Activated B cell treated with CpG ODN at 0.5 μM for 24 hours (primary cell): ENCODE measurements at regions of chr3 and their contacts with region 1.

Region 1: DNA sequence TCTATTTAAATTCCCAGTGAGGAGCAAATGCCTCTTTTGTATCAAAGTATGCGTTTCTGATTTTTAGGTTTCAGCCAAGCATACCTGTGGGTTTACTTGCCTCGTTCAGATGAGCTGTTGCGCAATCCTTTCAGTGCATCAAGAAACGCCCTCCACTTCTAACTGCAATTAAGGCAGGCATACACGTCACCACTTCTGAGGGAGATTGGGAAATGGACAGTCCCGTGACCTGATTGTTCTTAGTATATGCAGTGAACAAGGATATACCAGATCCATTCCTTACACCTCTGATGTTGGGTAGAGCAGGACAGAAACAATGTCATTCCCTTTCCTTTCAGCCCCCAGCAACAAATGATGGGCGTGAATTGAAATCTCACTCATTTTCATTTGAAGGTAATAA is 219.0 kb downstream of the ITPR1 start:
- DNase-seq: no peak
- ATAC-seq: no peak
- H3K4me3 Mint-ChIP-seq: no peak overlapping the region
- H3K27ac Mint-ChIP-seq: no peak overlapping the region
- H3K4me1 Mint-ChIP-seq: peaks cover 2% of the 10 kb centered on the region
- H3K27me3 Mint-ChIP-seq: no peaks in the 10 kb centered on the region
- CTCF ChIP-seq: no peak

Region 2: GRCh38 chr3:4670352-4670751 is 41.8 kb before region 1 on chr3:
- CTCF ChIA-PET with region 1: no interaction called
- POLR2A ChIA-PET with region 1: no interaction called
- intact Hi-C with region 1: no loop called
- DNase-seq: no peak
- ATAC-seq: no peak
- H3K4me3 Mint-ChIP-seq: no peak overlapping the region
- H3K27ac Mint-ChIP-seq: no peak overlapping the region
- H3K4me1 Mint-ChIP-seq: no peaks in the 10 kb centered on the region
- H3K27me3 Mint-ChIP-seq: no peaks in the 10 kb centered on the region
- CTCF ChIP-seq: no peak

Region 3: GRCh38 chr3:4826237-4827100 is 114.3 kb after region 1 on chr3:
- CTCF ChIA-PET with region 1: interaction called, 4 read pairs
- POLR2A ChIA-PET with region 1: no interaction called
- intact Hi-C with region 1: loop called (anchors 5 kb)
- DNase-seq: no peak
- ATAC-seq: peak; percentile 53
- H3K4me3 Mint-ChIP-seq: peak overlapping the region; percentile 59
- H3K27ac Mint-ChIP-seq: peak overlapping the region; percentile 3
- H3K4me1 Mint-ChIP-seq: peaks cover 85% of the 10 kb centered on the region
- H3K27me3 Mint-ChIP-seq: no peaks in the 10 kb centered on the region
- CTCF ChIP-seq: no peak

Region 4: GRCh38 chr3:5041315-5041714 is 329.2 kb after region 1 on chr3:
- CTCF ChIA-PET with region 1: interaction called, 12 read pairs
- POLR2A ChIA-PET with region 1: interaction called, 3 read pairs
- intact Hi-C with region 1: no loop called
- DNase-seq: no peak
- ATAC-seq: no peak
- H3K4me3 Mint-ChIP-seq: no peak overlapping the region
- H3K27ac Mint-ChIP-seq: no peak overlapping the region
- H3K4me1 Mint-ChIP-seq: peaks cover 24% of the 10 kb centered on the region
- H3K27me3 Mint-ChIP-seq: no peaks in the 10 kb centered on the region
- CTCF ChIP-seq: no peak

Region 5: GRCh38 chr3:5057857-5058324 is 345.7 kb after region 1 on chr3:
- CTCF ChIA-PET with region 1: interaction called, 219 read pairs
- POLR2A ChIA-PET with region 1: interaction called, 7 read pairs
- intact Hi-C with region 1: loop called (anchors 1 kb)
- DNase-seq: peak; percentile 38
- ATAC-seq: peak; percentile 90
- H3K4me3 Mint-ChIP-seq: no peak overlapping the region
- H3K27ac Mint-ChIP-seq: peak overlapping the region; percentile 3
- H3K4me1 Mint-ChIP-seq: peaks cover 42% of the 10 kb centered on the region
- H3K27me3 Mint-ChIP-seq: no peaks in the 10 kb centered on the region
- CTCF ChIP-seq: peak; percentile 26

Region 6: DNA sequence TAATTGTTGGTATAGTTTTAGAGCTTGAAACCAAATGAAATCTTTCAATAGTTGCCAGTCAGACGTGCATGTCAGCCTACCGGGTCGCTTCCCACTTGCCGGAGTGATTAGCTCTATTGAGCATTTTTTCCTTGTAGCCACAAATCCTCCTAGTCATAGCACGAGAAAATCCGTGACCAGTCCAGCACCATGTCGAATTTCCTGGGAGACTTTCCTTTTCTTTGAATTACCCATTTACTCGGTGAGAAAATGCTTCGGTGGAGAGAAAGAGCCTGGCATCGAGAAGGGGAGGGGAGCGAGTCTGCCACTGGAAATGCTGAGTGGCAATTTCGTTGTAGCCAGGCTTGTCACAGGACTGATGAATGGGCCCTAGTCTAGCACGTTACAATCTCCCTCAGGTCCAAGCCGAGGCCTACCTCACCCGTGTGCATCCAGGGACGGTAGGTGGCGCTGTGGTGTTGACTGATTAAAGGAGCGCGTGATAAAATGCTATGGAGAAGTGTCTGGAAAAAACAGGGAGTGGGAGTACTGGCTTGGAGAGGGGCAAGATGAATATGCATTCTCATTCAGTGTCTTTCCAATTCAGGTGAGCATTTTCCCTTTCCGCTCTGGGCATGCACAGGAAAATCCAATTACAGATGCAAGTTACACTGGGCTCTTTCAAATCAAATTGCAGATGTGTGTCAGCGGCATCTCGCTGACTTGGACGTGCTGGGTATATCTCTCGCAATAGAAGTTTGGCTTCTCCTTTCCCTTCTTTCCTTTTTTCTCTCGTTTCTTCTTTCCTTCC is 714.1 kb after region 1 on chr3:
- CTCF ChIA-PET with region 1: no interaction called
- POLR2A ChIA-PET with region 1: no interaction called
- intact Hi-C with region 1: no loop called
- DNase-seq: peak; percentile 44
- ATAC-seq: peak; percentile 70
- H3K4me3 Mint-ChIP-seq: no peak overlapping the region
- H3K27ac Mint-ChIP-seq: no peak overlapping the region
- H3K4me1 Mint-ChIP-seq: peaks cover 18% of the 10 kb centered on the region
- H3K27me3 Mint-ChIP-seq: peaks cover 5% of the 10 kb centered on the region
- CTCF ChIP-seq: no peak